Caco-2 (cell line): ENCODE measurements at regions of chr5 and their contacts with region 1.

Region 1: DNA sequence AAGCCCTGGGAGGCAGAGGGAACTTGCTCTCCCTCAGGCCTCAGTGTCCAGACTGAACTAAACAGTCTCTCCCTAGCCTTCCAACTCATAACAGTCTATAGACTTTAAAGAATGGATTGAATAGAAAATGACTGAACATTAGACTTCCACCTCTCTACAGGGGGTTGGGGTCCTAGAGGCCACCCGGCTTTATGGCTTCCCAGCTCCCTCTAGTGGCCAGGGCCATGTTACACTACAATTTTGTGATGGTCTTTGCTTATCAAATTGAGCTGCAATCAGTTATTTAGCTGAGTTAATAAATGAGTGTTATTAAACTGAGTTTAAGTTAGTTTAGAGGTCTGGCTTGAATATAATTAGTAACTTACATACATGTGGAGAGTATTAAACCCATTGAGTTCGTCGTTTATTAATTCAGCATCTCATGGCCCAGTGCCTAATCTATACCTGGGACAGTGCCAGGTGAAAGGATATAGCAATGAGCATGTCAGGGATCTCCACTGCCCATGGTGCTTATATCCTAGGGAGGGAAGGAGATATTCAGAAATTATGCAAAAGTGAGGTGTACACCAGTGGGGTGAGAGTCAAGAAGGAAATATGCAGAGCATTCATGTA is 105.2 kb downstream of the SH3TC2 start:
- DNase-seq: peak; percentile 47 to 61
- H3K4me3 ChIP-seq: no peak overlapping the region
- H3K4me3 Mint-ChIP-seq: no peak overlapping the region
- H3K27ac Mint-ChIP-seq: no peak overlapping the region
- H3K4me1 ChIP-seq: peaks cover 6% of the 10 kb centered on the region; the same call in 1 of the 2 replicates
- H3K4me1 Mint-ChIP-seq: no peaks in the 10 kb centered on the region
- H3K27me3 ChIP-seq: no peaks in the 10 kb centered on the region
- H3K27me3 Mint-ChIP-seq: peaks cover 9% of the 10 kb centered on the region
- CTCF ChIP-seq: peak; percentile 87 to 88

Region 2: GRCh38 chr5:148740966-148741742 is 216.5 kb before region 1 on chr5:
- CTCF ChIA-PET with region 1: interaction called, 11 read pairs
- POLR2A ChIA-PET with region 1: no interaction called
- intact Hi-C with region 1: no loop called
- DNase-seq: peak in 1 of 2 experiments; percentile 45
- H3K4me3 ChIP-seq: no peak overlapping the region
- H3K4me3 Mint-ChIP-seq: no peak overlapping the region
- H3K27ac Mint-ChIP-seq: no peak overlapping the region
- H3K4me1 ChIP-seq: no peaks in the 10 kb centered on the region
- H3K4me1 Mint-ChIP-seq: no peaks in the 10 kb centered on the region
- H3K27me3 ChIP-seq: no peaks in the 10 kb centered on the region
- H3K27me3 Mint-ChIP-seq: peaks cover 11% of the 10 kb centered on the region
- CTCF ChIP-seq: peak; percentile 64 to 67

Region 3: GRCh38 chr5:148820461-148821395 is 137.0 kb before region 1 on chr5:
- CTCF ChIA-PET with region 1: interaction called, 10 read pairs
- POLR2A ChIA-PET with region 1: no interaction called
- intact Hi-C with region 1: loop called (anchors 2 kb)
- DNase-seq: peak in 1 of 2 experiments; percentile 37
- H3K4me3 ChIP-seq: no peak overlapping the region
- H3K4me3 Mint-ChIP-seq: no peak overlapping the region
- H3K27ac Mint-ChIP-seq: no peak overlapping the region
- H3K4me1 ChIP-seq: peaks cover 2% of the 10 kb centered on the region; the same call in 1 of the 2 replicates
- H3K4me1 Mint-ChIP-seq: peaks cover 4% of the 10 kb centered on the region
- H3K27me3 ChIP-seq: peaks cover 2% of the 10 kb centered on the region; the same call in 1 of the 2 replicates
- H3K27me3 Mint-ChIP-seq: peaks cover 27% of the 10 kb centered on the region
- CTCF ChIP-seq: peak; percentile 69 to 71

Region 4: DNA sequence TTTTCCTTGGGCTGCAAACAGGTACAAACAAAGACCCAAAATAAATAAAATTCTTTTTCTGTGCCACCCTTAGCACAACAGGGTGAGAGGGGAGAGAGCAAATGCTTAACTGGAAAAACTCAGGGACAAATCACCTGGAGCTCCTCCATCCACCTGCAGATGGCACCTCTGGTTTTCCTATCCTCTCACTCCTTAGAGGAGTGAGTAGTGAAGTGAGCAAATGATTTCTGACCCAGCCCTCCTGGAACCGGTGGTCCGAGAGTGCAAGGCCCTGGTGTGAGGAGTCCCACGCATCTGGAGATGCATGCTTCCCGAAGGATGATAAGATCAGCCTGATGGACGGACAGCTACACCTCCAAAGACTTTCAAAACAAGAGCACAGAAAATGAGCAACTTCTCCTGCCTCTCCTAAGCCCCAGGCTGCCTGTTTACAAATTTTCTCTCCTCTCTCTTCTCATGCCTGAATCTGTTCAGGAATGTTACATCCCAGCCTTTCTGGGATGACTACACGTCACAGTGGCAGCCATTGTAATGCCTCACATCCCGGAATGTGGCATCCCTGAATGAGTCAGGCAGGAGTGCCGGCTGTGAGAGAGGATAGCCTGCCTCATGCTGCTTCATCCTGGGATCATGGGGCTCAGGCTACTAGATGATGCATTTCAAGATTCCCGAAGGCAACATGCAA is 44.8 kb before region 1 on chr5:
- CTCF ChIA-PET with region 1: interaction called, 16 read pairs
- POLR2A ChIA-PET with region 1: no interaction called
- intact Hi-C with region 1: loop called (anchors 1 kb)
- DNase-seq: peak in 1 of 2 experiments; percentile 40
- H3K4me3 ChIP-seq: no peak overlapping the region
- H3K4me3 Mint-ChIP-seq: no peak overlapping the region
- H3K27ac Mint-ChIP-seq: peak overlapping the region; percentile 50
- H3K4me1 ChIP-seq: peaks cover 31% of the 10 kb centered on the region
- H3K4me1 Mint-ChIP-seq: peaks cover 6% of the 10 kb centered on the region
- H3K27me3 ChIP-seq: no peaks in the 10 kb centered on the region
- H3K27me3 Mint-ChIP-seq: peaks cover 3% of the 10 kb centered on the region
- CTCF ChIP-seq: peak; percentile 50 to 65

Region 5: DNA sequence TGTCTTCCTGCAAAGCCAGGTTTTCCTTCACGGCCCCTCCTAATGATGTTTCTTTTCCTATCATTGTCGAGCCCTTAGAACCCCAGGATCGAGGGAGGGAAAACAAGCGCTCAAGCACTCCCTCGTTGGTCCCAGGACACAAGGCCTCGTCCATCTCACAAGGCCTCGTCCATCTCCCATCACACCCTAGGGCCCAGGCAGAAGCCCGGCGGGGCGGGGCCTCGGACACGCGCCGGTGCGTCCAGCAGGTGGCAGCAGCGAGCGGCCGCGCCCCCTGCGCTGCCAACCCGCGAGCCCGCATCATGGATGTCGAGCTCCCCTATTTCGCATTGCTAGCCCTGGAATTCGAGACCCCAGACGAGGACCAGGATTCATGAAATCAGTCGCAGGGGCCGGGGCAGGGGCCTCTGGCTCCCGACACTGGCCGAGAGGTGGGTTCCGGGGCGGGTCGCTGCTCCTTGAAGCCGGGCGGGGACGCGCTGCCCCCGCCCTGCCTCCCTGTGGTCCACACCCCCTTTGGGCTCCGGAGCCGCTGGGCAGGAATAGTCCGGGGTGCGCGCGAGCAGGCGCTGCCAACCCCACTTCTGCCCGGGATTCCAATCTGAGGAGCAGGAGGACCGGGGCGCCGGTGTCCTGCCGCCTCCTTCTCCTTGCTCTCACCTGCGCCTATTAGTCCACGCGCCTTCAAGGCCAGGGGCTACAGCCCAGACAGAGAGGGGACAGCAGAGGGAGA is 183.7 kb after region 1 on chr5 and contains the start of gene ABLIM3:
- CTCF ChIA-PET with region 1: no interaction called
- POLR2A ChIA-PET with region 1: no interaction called
- intact Hi-C with region 1: no loop called
- DNase-seq: peak in 1 of 2 experiments; percentile 80
- H3K4me3 ChIP-seq: peak within 1 kb of the TSS; percentile 45
- H3K4me3 Mint-ChIP-seq: peak within 1 kb of the TSS; percentile 43
- H3K27ac Mint-ChIP-seq: no peak within 1 kb of the TSS
- H3K4me1 ChIP-seq: no peaks in the 10 kb centered on the region
- H3K4me1 Mint-ChIP-seq: no peaks in the 10 kb centered on the region
- H3K27me3 ChIP-seq: peaks cover 3% of the 10 kb centered on the region; the same call in 1 of the 2 replicates
- H3K27me3 Mint-ChIP-seq: peaks cover 10% of the 10 kb centered on the region
- CTCF ChIP-seq: peak; percentile 71 to 91
- total RNA-seq, gene ABLIM3: not detected in 2 replicates